ENCODE measurements at regions of chrX and their contacts with region 1.

Region 1: GRCh38 chrX:109475174-109475891 is 6.6 kb downstream of the GUCY2F start:
- DNase-seq: peak; percentile 62
- ATAC-seq: peak; percentile 84
- H3K4me3 ChIP-seq: peak overlapping the region; percentile 38; the same call in 1 of the 2 replicates
- H3K27ac ChIP-seq: no peak overlapping the region
- H3K4me1 ChIP-seq: no peaks in the 10 kb centered on the region
- H3K27me3 ChIP-seq: 0 out of 2 replicates have a peak, but pooled peaks cover 4% of the 10 kb centered on the region
- CTCF ChIP-seq: peak; percentile 70

Region 2: GRCh38 chrX:108199691-108200090 is 1275.6 kb before region 1 on chrX:
- CTCF ChIA-PET with region 1: no interaction called
- POLR2A ChIA-PET with region 1: no interaction called
- intact Hi-C with region 1: loop called (anchors 2 kb)
- DNase-seq: peak; percentile 77
- ATAC-seq: peak; percentile 72
- H3K4me3 ChIP-seq: no peak overlapping the region
- H3K27ac ChIP-seq: no peak overlapping the region
- H3K4me1 ChIP-seq: peaks cover 13% of the 10 kb centered on the region
- H3K27me3 ChIP-seq: no peaks in the 10 kb centered on the region
- CTCF ChIP-seq: peak; percentile 84

Region 3: DNA sequence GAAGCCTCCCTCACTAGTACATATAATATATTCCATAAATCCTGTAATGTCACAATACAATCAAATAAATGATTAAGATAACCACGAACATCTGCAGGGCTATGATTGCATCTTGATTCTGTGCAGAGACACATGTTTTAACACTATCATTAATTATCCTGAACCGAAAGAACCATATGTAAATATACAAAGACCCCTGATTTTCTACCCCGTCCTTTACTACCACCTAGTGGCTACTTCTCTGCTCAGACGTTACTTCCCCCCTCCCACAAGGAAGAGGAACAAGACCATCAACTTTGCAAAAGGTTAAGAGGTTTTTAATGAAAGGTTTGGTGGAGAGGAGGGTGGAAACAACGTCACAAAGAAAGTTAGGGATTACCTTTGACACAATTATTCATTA is 1171.1 kb before region 1 on chrX:
- CTCF ChIA-PET with region 1: no interaction called
- POLR2A ChIA-PET with region 1: no interaction called
- intact Hi-C with region 1: loop called (anchors 5 kb)
- DNase-seq: peak; percentile 41
- ATAC-seq: no peak
- H3K4me3 ChIP-seq: no peak overlapping the region
- H3K27ac ChIP-seq: no peak overlapping the region; the same call in 1 of the 2 replicates
- H3K4me1 ChIP-seq: peaks cover 42% of the 10 kb centered on the region
- H3K27me3 ChIP-seq: no peaks in the 10 kb centered on the region
- CTCF ChIP-seq: peak; percentile 74

Region 4: DNA sequence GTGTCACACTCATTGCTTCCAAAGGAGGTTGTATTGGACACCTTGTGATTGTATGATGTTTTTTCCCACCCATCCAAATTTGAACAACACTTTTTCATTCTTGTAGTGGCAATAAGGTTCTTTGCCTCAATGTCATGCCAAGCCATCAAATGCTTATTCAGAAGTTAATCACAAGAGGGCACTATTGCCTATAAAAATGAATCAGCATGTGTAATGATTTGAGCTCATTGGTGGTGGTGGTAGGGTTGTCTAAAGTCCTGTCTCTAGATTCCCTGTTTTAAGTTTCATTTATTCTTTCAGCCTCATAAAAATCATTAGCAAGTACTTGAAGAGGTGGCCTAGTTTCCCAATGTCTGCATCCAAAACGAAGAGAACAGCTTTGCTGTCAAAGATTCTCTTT is 776.0 kb before region 1 on chrX:
- CTCF ChIA-PET with region 1: interaction called, 4 read pairs
- POLR2A ChIA-PET with region 1: no interaction called
- intact Hi-C with region 1: loop called (anchors 2 kb)
- DNase-seq: peak; percentile 66
- ATAC-seq: peak; percentile 52
- H3K4me3 ChIP-seq: no peak overlapping the region
- H3K27ac ChIP-seq: no peak overlapping the region
- H3K4me1 ChIP-seq: peaks cover 18% of the 10 kb centered on the region
- H3K27me3 ChIP-seq: no peaks in the 10 kb centered on the region
- CTCF ChIP-seq: peak; percentile 68

Region 5: GRCh38 chrX:109619771-109620170 is 144.4 kb after region 1 on chrX:
- CTCF ChIA-PET with region 1: no interaction called
- POLR2A ChIA-PET with region 1: no interaction called
- intact Hi-C with region 1: no loop called
- DNase-seq: no peak
- ATAC-seq: no peak
- H3K4me3 ChIP-seq: no peak overlapping the region
- H3K27ac ChIP-seq: no peak overlapping the region
- H3K4me1 ChIP-seq: no peaks in the 10 kb centered on the region
- H3K27me3 ChIP-seq: peaks cover 15% of the 10 kb centered on the region; the same call in 1 of the 2 replicates
- CTCF ChIP-seq: no peak